Caco-2 (cell line): ENCODE measurements at regions of chr9 and their contacts with region 1.

Region 1: GRCh38 chr9:13427587-13427986 is 148.1 kb upstream of the MPDZ start:
- DNase-seq: peak in 1 of 2 experiments; percentile 0
- H3K4me3 ChIP-seq: no peak overlapping the region
- H3K4me3 Mint-ChIP-seq: no peak overlapping the region
- H3K27ac Mint-ChIP-seq: no peak overlapping the region
- H3K4me1 ChIP-seq: no peaks in the 10 kb centered on the region
- H3K4me1 Mint-ChIP-seq: no peaks in the 10 kb centered on the region
- H3K27me3 ChIP-seq: no peaks in the 10 kb centered on the region
- H3K27me3 Mint-ChIP-seq: no peaks in the 10 kb centered on the region
- CTCF ChIP-seq: peak; percentile 38 to 46

Region 2: DNA sequence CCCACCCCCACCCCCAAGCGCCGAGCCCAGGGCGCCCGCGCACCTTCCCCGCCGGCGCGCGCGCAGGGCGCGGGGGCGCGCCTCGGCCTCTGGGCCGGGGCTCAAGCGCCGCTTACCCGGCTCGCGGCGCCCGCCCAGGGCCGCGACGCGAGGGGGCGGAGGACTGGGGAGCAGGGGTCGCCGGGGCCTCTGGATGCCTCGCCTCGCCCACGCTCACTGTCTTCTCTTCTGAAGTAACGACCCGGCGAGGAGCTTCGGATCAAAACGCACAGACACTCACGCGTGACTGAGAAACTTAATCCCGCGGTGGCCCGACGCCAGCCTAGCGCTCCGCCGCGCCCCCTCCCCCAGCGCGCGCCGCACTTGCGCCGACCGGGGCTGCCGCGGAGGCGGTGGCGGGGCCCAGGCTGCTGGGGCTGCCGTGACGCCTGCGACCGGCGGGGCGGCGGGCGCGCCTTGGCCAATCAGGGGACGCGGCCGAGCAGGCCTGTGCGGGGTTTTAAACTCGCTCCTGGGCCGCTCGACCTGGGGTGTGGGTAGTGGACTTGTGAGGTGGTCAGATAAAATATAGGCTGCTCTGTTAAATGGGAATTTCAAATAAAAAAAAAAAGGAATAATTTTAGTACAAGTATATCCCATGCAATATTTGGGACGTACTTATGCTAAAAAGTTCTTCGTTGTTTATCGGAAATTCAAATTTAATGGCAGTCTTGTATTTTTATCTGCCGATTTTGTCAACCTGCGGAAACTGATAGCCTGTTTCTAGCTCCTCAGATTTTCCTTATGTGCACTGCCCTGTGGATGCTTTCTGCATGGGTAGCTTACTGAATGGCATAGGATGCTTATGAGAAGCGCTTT is 148.1 kb before region 1 on chr9 and contains the start of gene MPDZ:
- CTCF ChIA-PET with region 1: no interaction called
- POLR2A ChIA-PET with region 1: no interaction called
- intact Hi-C with region 1: no loop called
- DNase-seq: no peak
- H3K4me3 ChIP-seq: no peak within 1 kb of the TSS
- H3K4me3 Mint-ChIP-seq: no peak within 1 kb of the TSS
- H3K27ac Mint-ChIP-seq: no peak within 1 kb of the TSS
- H3K4me1 ChIP-seq: no peaks in the 10 kb centered on the region
- H3K4me1 Mint-ChIP-seq: no peaks in the 10 kb centered on the region
- H3K27me3 ChIP-seq: no peaks in the 10 kb centered on the region
- H3K27me3 Mint-ChIP-seq: no peaks in the 10 kb centered on the region
- CTCF ChIP-seq: no peak
- total RNA-seq, gene MPDZ: 0.23 TPM in 1 of 2 replicates, not detected in the other

Region 3: GRCh38 chr9:13318027-13318426 is 109.6 kb before region 1 on chr9:
- CTCF ChIA-PET with region 1: no interaction called
- POLR2A ChIA-PET with region 1: no interaction called
- intact Hi-C with region 1: no loop called
- DNase-seq: no peak
- H3K4me3 ChIP-seq: no peak overlapping the region
- H3K4me3 Mint-ChIP-seq: no peak overlapping the region
- H3K27ac Mint-ChIP-seq: no peak overlapping the region
- H3K4me1 ChIP-seq: no peaks in the 10 kb centered on the region
- H3K4me1 Mint-ChIP-seq: no peaks in the 10 kb centered on the region
- H3K27me3 ChIP-seq: no peaks in the 10 kb centered on the region
- H3K27me3 Mint-ChIP-seq: no peaks in the 10 kb centered on the region
- CTCF ChIP-seq: no peak

Region 4: GRCh38 chr9:13378154-13378553 is 49.4 kb before region 1 on chr9:
- CTCF ChIA-PET with region 1: no interaction called
- POLR2A ChIA-PET with region 1: no interaction called
- intact Hi-C with region 1: no loop called
- DNase-seq: no peak
- H3K4me3 ChIP-seq: no peak overlapping the region
- H3K4me3 Mint-ChIP-seq: no peak overlapping the region
- H3K27ac Mint-ChIP-seq: no peak overlapping the region
- H3K4me1 ChIP-seq: no peaks in the 10 kb centered on the region
- H3K4me1 Mint-ChIP-seq: no peaks in the 10 kb centered on the region
- H3K27me3 ChIP-seq: no peaks in the 10 kb centered on the region
- H3K27me3 Mint-ChIP-seq: no peaks in the 10 kb centered on the region
- CTCF ChIP-seq: no peak

Region 5: GRCh38 chr9:13688994-13689600 is 261.5 kb after region 1 on chr9:
- CTCF ChIA-PET with region 1: no interaction called
- POLR2A ChIA-PET with region 1: no interaction called
- intact Hi-C with region 1: loop called (anchors 2 kb)
- DNase-seq: no peak
- H3K4me3 ChIP-seq: no peak overlapping the region
- H3K4me3 Mint-ChIP-seq: no peak overlapping the region
- H3K27ac Mint-ChIP-seq: no peak overlapping the region
- H3K4me1 ChIP-seq: no peaks in the 10 kb centered on the region
- H3K4me1 Mint-ChIP-seq: no peaks in the 10 kb centered on the region
- H3K27me3 ChIP-seq: no peaks in the 10 kb centered on the region
- H3K27me3 Mint-ChIP-seq: no peaks in the 10 kb centered on the region
- CTCF ChIP-seq: peak; percentile 5 to 13

Region 6: GRCh38 chr9:14353222-14354056 is 925.9 kb after region 1 on chr9:
- CTCF ChIA-PET with region 1: interaction called, 4 read pairs
- POLR2A ChIA-PET with region 1: no interaction called
- intact Hi-C with region 1: loop called (anchors 1 kb)
- DNase-seq: peak; percentile 75 to 85
- H3K4me3 ChIP-seq: no peak overlapping the region
- H3K4me3 Mint-ChIP-seq: no peak overlapping the region
- H3K27ac Mint-ChIP-seq: no peak overlapping the region
- H3K4me1 ChIP-seq: no peaks in the 10 kb centered on the region
- H3K4me1 Mint-ChIP-seq: no peaks in the 10 kb centered on the region
- H3K27me3 ChIP-seq: no peaks in the 10 kb centered on the region; the same call in 1 of the 2 replicates
- H3K27me3 Mint-ChIP-seq: peaks cover 24% of the 10 kb centered on the region
- CTCF ChIP-seq: peak; percentile 63 to 84

Region 7: DNA sequence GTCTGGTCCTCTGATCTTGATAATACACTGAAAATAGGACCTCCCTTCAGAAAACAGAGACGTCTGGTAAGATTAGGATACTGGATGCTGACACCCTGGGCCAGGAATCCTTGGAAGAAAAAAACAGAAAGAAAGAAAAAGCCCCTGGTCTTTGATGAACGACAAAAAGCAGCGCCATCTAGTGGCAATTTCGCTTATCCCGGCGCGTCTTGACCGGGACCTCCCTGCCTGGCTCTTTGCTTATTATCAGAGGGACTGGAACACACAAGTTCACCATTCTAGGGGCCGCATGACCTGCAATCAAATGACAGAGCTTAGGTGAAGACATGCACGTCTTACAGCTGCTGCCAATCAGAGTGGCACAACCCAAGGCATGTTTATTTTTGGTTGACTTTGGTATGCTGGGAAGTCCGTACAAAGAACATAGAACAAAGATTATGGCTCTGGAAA is 1001.2 kb after region 1 on chr9:
- CTCF ChIA-PET with region 1: no interaction called
- POLR2A ChIA-PET with region 1: no interaction called
- intact Hi-C with region 1: loop called (anchors 1 kb)
- DNase-seq: peak; percentile 57 to 59
- H3K4me3 ChIP-seq: no peak overlapping the region
- H3K4me3 Mint-ChIP-seq: no peak overlapping the region
- H3K27ac Mint-ChIP-seq: no peak overlapping the region
- H3K4me1 ChIP-seq: no peaks in the 10 kb centered on the region
- H3K4me1 Mint-ChIP-seq: peaks cover 6% of the 10 kb centered on the region
- H3K27me3 ChIP-seq: no peaks in the 10 kb centered on the region
- H3K27me3 Mint-ChIP-seq: no peaks in the 10 kb centered on the region
- CTCF ChIP-seq: peak; percentile 55 to 62